IMR-90 (cell line): ENCODE measurements at regions of chr15 and their contacts with region 1.

Region 1: GRCh38 chr15:52568601-52569256 is at the start of gene ARPP19:
- DNase-seq: peak; percentile 86
- ATAC-seq: peak; percentile 88
- H3K4me3 ChIP-seq: peak within 1 kb of the TSS; percentile 91
- H3K27ac ChIP-seq: peak within 1 kb of the TSS; percentile 35
- H3K4me1 ChIP-seq: peaks cover 5% of the 10 kb centered on the region
- H3K27me3 ChIP-seq: no peaks in the 10 kb centered on the region
- CTCF ChIP-seq: 0 out of 2 replicates have a peak, but pooled peaks have one; percentile 22
- POLR2A ChIP-seq: peak; percentile 62; the same call in 1 of the 2 replicates
- RAD21 ChIP-seq: peak; percentile 32
- total RNA-seq, gene ARPP19: 65.2 and 118 TPM in 2 replicates

Region 2: DNA sequence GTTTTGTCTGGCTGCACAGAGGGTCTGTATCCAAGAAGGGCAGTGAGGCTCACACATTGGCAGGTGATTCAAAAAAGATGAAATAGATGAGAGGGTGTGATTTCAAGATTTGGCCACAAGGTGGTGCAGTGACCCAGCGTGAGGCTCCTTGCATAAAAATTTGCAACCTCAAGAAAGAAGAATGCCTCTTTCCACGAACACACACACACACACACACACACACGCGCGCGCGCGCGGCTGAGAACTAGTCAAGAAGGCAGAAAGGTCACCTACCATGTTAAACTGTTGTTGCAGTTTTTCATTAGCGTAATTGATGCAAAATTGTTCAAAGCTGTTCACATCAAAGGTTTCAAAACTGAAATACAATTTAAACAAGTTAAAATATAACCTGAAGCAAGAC is 312.4 kb before region 1 on chr15:
- CTCF ChIA-PET with region 1: interaction called, 5 read pairs
- POLR2A ChIA-PET with region 1: no interaction called
- dilution Hi-C with region 1: no loop called
- in situ Hi-C with region 1: no loop called
- intact Hi-C with region 1: loop called (anchors 2 kb)
- DNase-seq: peak; percentile 80
- ATAC-seq: peak; percentile 64
- H3K4me3 ChIP-seq: no peak overlapping the region; the same call in 1 of the 2 replicates
- H3K27ac ChIP-seq: no peak overlapping the region
- H3K4me1 ChIP-seq: peaks cover 10% of the 10 kb centered on the region
- H3K27me3 ChIP-seq: no peaks in the 10 kb centered on the region
- CTCF ChIP-seq: peak; percentile 82
- POLR2A ChIP-seq: no peak
- RAD21 ChIP-seq: peak; percentile 91

Region 3: GRCh38 chr15:52331490-52332240 is 237.1 kb before region 1 on chr15:
- CTCF ChIA-PET with region 1: no interaction called
- POLR2A ChIA-PET with region 1: no interaction called
- dilution Hi-C with region 1: no loop called
- in situ Hi-C with region 1: no loop called
- intact Hi-C with region 1: loop called (anchors 5 kb)
- DNase-seq: peak; percentile 54
- ATAC-seq: peak; percentile 47; the same call in 1 of the 2 replicates
- H3K4me3 ChIP-seq: no peak overlapping the region
- H3K27ac ChIP-seq: no peak overlapping the region
- H3K4me1 ChIP-seq: peaks cover 4% of the 10 kb centered on the region; the same call in 1 of the 2 replicates
- H3K27me3 ChIP-seq: no peaks in the 10 kb centered on the region
- CTCF ChIP-seq: peak; percentile 51
- POLR2A ChIP-seq: no peak
- RAD21 ChIP-seq: peak; percentile 63

Region 4: GRCh38 chr15:52466134-52466701 is 102.5 kb before region 1 on chr15:
- CTCF ChIA-PET with region 1: no interaction called
- POLR2A ChIA-PET with region 1: no interaction called
- dilution Hi-C with region 1: no loop called
- in situ Hi-C with region 1: no loop called
- intact Hi-C with region 1: no loop called
- DNase-seq: no peak
- ATAC-seq: no peak
- H3K4me3 ChIP-seq: no peak overlapping the region
- H3K27ac ChIP-seq: no peak overlapping the region
- H3K4me1 ChIP-seq: peaks cover 7% of the 10 kb centered on the region
- H3K27me3 ChIP-seq: no peaks in the 10 kb centered on the region
- CTCF ChIP-seq: no peak
- POLR2A ChIP-seq: no peak
- RAD21 ChIP-seq: no peak

Region 5: DNA sequence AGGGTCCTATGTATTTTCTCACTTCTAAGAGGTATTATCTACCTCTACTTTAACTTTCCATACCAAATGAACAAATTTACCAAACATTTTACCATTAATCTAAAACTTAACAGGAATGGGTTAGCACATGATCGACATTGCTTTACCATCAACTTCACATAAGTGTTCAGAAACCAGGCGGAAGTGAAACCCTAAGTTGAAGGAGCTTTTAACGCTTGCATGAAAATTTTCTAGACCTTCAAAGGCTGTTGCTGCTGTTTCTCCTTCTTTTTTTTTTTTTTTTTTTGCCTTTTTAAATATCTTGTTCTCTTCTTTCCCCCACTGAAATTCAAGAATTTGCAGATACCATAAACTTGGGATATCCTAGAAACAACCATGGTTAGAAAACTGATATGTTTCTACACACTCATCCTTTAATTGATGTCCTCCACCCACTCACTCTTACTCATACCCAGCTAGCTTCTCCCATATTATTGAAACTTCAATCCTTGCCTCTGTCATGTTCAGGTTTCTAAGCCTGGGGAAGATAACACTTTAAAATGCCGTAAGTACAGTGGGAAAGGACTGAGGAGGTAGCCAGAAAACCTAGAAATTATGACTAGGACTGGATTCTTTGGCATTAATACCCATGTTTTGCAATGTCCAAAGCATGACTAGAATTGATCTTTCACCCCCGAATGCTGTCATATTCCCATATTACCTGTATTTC is 64.8 kb before region 1 on chr15:
- CTCF ChIA-PET with region 1: interaction called, 14 read pairs
- POLR2A ChIA-PET with region 1: no interaction called
- dilution Hi-C with region 1: no loop called
- in situ Hi-C with region 1: no loop called
- intact Hi-C with region 1: no loop called
- DNase-seq: peak; percentile 86
- ATAC-seq: peak; percentile 62
- H3K4me3 ChIP-seq: no peak overlapping the region
- H3K27ac ChIP-seq: no peak overlapping the region
- H3K4me1 ChIP-seq: peaks cover 2% of the 10 kb centered on the region; the same call in 1 of the 2 replicates
- H3K27me3 ChIP-seq: no peaks in the 10 kb centered on the region
- CTCF ChIP-seq: no peak
- POLR2A ChIP-seq: no peak
- RAD21 ChIP-seq: no peak

Region 6: GRCh38 chr15:52518490-52519371 is 50.0 kb before region 1 on chr15:
- CTCF ChIA-PET with region 1: no interaction called
- POLR2A ChIA-PET with region 1: no interaction called
- dilution Hi-C with region 1: no loop called
- in situ Hi-C with region 1: no loop called
- intact Hi-C with region 1: no loop called
- DNase-seq: peak; percentile 63
- ATAC-seq: peak; percentile 30; the same call in 1 of the 2 replicates
- H3K4me3 ChIP-seq: no peak overlapping the region
- H3K27ac ChIP-seq: no peak overlapping the region
- H3K4me1 ChIP-seq: peaks cover 9% of the 10 kb centered on the region
- H3K27me3 ChIP-seq: no peaks in the 10 kb centered on the region
- CTCF ChIP-seq: no peak
- POLR2A ChIP-seq: no peak
- RAD21 ChIP-seq: no peak

Region 7: GRCh38 chr15:52528991-52529926 is 39.5 kb before region 1 on chr15:
- CTCF ChIA-PET with region 1: no interaction called
- POLR2A ChIA-PET with region 1: no interaction called
- dilution Hi-C with region 1: no loop called
- in situ Hi-C with region 1: no loop called
- intact Hi-C with region 1: loop called (anchors 2 kb)
- DNase-seq: peak; percentile 71
- ATAC-seq: peak; percentile 87
- H3K4me3 ChIP-seq: peak overlapping the region; percentile 75
- H3K27ac ChIP-seq: peak overlapping the region; percentile 25
- H3K4me1 ChIP-seq: 0 out of 2 replicates have a peak, but pooled peaks cover 3% of the 10 kb centered on the region
- H3K27me3 ChIP-seq: peaks cover 8% of the 10 kb centered on the region
- CTCF ChIP-seq: 0 out of 2 replicates have a peak, but pooled peaks have one; percentile 15
- POLR2A ChIP-seq: no peak
- RAD21 ChIP-seq: peak; percentile 40

Region 8: GRCh38 chr15:52765785-52766184 is 197.1 kb after region 1 on chr15:
- CTCF ChIA-PET with region 1: no interaction called
- POLR2A ChIA-PET with region 1: no interaction called
- dilution Hi-C with region 1: no loop called
- in situ Hi-C with region 1: no loop called
- intact Hi-C with region 1: no loop called
- DNase-seq: peak; percentile 6
- ATAC-seq: peak; percentile 57; the same call in 1 of the 2 replicates
- H3K4me3 ChIP-seq: no peak overlapping the region
- H3K27ac ChIP-seq: no peak overlapping the region
- H3K4me1 ChIP-seq: no peaks in the 10 kb centered on the region
- H3K27me3 ChIP-seq: peaks cover 13% of the 10 kb centered on the region
- CTCF ChIP-seq: 0 out of 2 replicates have a peak, but pooled peaks have one; percentile 21
- POLR2A ChIP-seq: no peak
- RAD21 ChIP-seq: no peak